Gastrocnemius medialis (tissue), 4 donors: ENCODE measurements at regions of chr22 and their contacts with region 1.

Region 1: GRCh38 chr22:46035742-46036557 is 59.0 kb upstream of the WNT7B start:
- DNase-seq: peak; percentile 99 to 100
- ATAC-seq: peak; percentile 87 to 89
- H3K4me3 ChIP-seq: peak overlapping the region; percentile 75 to 80 (median 80)
- H3K27ac ChIP-seq: peak overlapping the region; percentile 97 to 99 (median 99)
- H3K4me1 ChIP-seq: peaks cover 42 to 45% of the 10 kb centered on the region in 2 donors
- H3K27me3 ChIP-seq: no peaks in the 10 kb centered on the region
- CTCF ChIP-seq: peak in 1 of 5 experiments; percentile 4
- POLR2A ChIP-seq: peak; percentile 96 to 98

Region 2: DNA sequence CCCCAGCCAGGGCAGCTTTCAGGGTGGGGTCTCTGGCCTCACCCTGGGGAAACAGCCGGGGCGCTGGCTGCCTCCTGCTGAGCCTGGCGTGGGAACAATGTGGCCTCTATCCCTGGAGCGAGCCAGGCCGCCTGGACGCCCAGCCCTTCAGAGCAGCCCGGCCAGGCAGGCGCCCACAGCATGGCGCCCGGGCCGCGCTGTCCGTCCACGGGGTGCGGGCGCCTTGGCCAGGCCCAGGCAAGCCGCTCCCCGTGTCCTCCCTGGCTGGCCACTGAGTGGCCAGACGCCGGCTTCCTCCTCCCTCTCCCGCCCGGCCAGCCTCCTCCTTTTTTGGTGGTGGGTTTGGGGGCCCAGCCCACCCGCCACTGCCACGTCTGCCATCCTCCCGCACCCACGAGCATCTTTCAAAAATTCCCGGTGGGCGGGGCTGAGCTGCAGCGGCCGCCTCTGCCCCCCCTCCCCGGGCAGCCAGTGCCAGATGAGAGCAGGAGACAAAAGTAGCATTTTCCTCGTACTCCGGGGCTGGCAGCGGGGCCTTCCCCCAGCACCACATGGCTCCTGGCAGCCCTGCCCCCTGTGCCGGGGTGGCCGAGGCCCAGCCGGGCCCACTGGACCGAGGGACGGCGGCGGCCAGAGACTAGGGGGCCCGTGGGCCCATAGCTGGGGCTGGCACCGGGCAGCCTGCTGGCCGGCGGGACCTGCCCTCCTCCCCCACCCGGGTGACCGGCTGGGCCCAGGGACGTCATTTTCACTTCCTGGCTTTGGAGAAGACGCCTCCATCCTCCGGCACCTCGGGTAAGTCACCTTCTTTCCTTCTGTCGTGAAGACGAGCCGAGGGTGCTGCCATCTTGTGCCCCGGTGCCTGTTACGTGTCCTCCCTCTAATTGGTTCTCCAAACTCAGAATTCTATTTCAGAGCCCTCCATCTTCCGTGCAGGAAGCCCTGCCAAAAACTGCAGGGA is 44.2 kb after region 1 on chr22:
- in situ Hi-C with region 1: no loop called
- intact Hi-C with region 1: loop called (anchors 2 kb)
- DNase-seq: peak; percentile 75 to 86
- ATAC-seq: peak; percentile 49 to 51
- H3K4me3 ChIP-seq: peak overlapping the region; percentile 78 to 86 (median 82)
- H3K27ac ChIP-seq: peak overlapping the region; percentile 94 to 98 (median 97)
- H3K4me1 ChIP-seq: peaks cover 88 to 89% of the 10 kb centered on the region in 2 donors
- H3K27me3 ChIP-seq: no peaks in the 10 kb centered on the region
- CTCF ChIP-seq: peak in 1 of 5 experiments; percentile 13
- POLR2A ChIP-seq: peak; percentile 69 to 74